ENCODE measurements at regions of chr20 and their contacts with region 1.

Region 1: DNA sequence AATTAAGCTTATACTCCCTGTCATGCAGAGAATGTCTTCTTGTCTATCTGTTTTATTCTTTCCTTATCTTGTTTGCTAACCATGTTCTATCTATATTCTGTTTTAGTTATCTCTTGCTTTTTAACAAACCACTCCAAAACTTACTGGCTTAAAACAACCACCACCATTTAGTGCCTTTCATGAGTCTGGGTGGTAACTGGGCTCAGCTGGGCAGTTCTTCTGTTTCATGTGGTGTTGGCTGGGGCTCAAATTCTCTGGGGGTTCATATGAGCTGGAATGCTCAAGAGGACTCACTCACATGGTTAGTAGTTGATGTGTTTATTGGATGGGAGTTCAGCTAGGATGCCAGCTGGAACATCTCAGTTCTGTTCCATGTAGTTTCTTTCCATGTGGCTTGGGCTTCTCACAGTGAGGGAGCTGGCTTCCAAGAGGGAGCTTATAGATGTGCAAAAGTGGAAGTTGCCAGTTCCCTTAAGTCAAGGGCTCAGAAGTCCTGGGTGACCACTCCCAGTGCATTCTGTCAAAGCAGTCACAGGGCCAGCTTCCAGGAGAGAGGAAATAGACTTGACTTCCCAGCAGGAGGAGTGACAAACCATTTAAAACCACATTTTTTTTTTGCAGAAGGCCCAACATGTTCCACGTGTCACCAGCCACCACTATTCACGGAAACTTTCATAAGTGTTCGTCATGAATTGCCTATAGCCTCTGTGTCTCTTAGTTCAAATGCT is 70.4 kb downstream of the PLCB4 start:
- DNase-seq: no peak
- H3K4me3 ChIP-seq: no peak overlapping the region
- H3K27ac ChIP-seq: no peak overlapping the region
- H3K4me1 ChIP-seq: no peaks in the 10 kb centered on the region
- H3K27me3 ChIP-seq: no peaks in the 10 kb centered on the region
- CTCF ChIP-seq: no peak
- EP300 ChIP-seq: no peak
- POLR2A ChIP-seq: no peak

Region 2: DNA sequence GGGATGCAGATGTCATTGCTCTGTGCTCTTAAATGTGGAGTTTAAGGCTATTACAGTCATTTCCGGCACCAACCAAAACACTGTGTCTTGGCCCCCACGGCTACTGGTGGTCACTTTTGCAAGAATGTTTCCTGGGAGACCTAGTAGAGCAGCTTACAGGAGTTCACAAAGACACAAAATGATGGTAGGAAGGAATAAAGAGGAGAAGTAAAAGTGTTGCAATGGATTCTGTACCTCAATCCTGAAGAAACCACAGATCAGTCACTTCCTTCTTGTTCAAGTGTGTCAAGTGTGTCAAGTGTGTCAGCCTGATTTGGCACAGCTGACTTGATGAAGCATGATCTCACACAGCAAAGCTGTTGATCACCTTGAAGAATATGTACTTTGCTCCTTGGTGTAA is 663.2 kb before region 1 on chr20:
- intact Hi-C with region 1: no loop called
- DNase-seq: no peak
- H3K4me3 ChIP-seq: no peak overlapping the region
- H3K27ac ChIP-seq: no peak overlapping the region
- H3K4me1 ChIP-seq: no peaks in the 10 kb centered on the region
- H3K27me3 ChIP-seq: no peaks in the 10 kb centered on the region
- CTCF ChIP-seq: no peak
- EP300 ChIP-seq: no peak
- POLR2A ChIP-seq: no peak

Region 3: DNA sequence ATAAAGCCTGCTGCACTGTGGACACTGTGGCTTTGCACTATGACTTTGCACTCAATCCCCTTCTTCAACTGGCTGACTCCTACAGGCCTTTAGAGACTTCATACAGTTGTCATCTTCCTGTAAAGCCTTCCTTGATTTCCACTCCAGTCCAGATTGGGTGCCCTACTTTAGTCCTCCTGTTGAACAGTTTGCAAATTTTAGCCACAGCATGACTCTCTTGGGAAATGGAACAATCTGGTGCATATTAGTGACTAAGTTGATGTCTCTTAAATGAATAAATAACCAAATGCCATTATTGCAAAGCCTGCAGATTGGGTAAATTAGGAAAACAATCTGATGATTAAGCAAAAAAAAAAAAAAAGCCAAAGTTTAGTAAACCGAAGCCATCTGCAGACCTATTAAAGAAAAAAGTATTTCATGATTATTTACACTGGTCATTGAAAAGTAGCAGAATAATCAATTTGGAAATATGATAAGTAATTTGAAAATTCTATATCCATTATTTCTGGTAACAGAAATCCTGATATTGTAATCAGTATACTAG is 57.8 kb before region 1 on chr20:
- intact Hi-C with region 1: loop called in 1 of 4 experiments (anchors 5 kb)
- DNase-seq: no peak
- H3K4me3 ChIP-seq: no peak overlapping the region
- H3K27ac ChIP-seq: no peak overlapping the region
- H3K4me1 ChIP-seq: no peaks in the 10 kb centered on the region
- H3K27me3 ChIP-seq: no peaks in the 10 kb centered on the region
- CTCF ChIP-seq: no peak
- EP300 ChIP-seq: no peak
- POLR2A ChIP-seq: no peak

Region 4: DNA sequence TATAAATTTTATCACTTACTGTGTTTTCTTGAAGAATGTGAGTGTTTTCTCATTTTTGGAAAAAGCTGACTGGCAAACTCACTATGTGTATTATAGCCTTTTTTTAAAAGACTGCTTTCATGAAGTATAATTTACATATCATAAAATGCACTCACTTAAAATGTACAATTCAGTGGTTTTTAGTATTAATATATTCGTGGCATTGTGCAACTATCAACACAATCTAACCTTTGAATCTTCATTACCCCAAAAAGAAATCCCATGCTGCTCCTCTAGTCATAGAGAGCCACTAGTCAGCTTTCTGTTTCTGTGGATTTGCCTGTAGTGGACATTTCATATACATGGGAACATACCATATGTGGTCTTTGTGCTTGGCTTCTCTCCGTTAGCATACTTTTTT is 73.5 kb after region 1 on chr20:
- intact Hi-C with region 1: loop called in 1 of 4 experiments (anchors 2 kb)
- DNase-seq: no peak
- H3K4me3 ChIP-seq: no peak overlapping the region
- H3K27ac ChIP-seq: no peak overlapping the region
- H3K4me1 ChIP-seq: no peaks in the 10 kb centered on the region
- H3K27me3 ChIP-seq: no peaks in the 10 kb centered on the region
- CTCF ChIP-seq: no peak
- EP300 ChIP-seq: no peak
- POLR2A ChIP-seq: no peak

Measured in ovary (tissue), 10 donors.